H1 (cell line): ENCODE measurements at regions of chr22 and their contacts with region 1.

Region 1: GRCh38 chr22:30968924-30969539 is at the start of gene TUG1:
- DNase-seq: peak; percentile 93
- H3K4me3 ChIP-seq: peak within 1 kb of the TSS; percentile 67 to 84 (median 74)
- H3K27ac ChIP-seq: peak within 1 kb of the TSS; percentile 93
- H3K4me1 ChIP-seq: peaks cover 0 to 7% (median 4%) of the 10 kb centered on the region in 4 experiments; a peak in 4 of 7 replicates
- H3K27me3 ChIP-seq: no peaks in the 10 kb centered on the region
- CTCF ChIP-seq: no peak
- EP300 ChIP-seq: no peak; a peak in 1 of 3 replicates
- POLR2A ChIP-seq: peak; percentile 85 to 97
- RAD21 ChIP-seq: peak in 1 of 2 experiments; percentile 0; a peak in 2 of 4 replicates
- total RNA-seq, gene TUG1: 106 and 119 TPM in 2 replicates

Region 2: GRCh38 chr22:30947816-30948454 is 21.1 kb before region 1 on chr22:
- CTCF ChIA-PET with region 1: interaction called, 5 read pairs
- POLR2A ChIA-PET with region 1: interaction called, 18 read pairs
- DNase-seq: no peak
- H3K4me3 ChIP-seq: no peak overlapping the region
- H3K27ac ChIP-seq: no peak overlapping the region
- H3K4me1 ChIP-seq: no peaks in the 10 kb centered on the region
- H3K27me3 ChIP-seq: no peaks in the 10 kb centered on the region
- CTCF ChIP-seq: peak in 1 of 3 experiments; percentile 40; a peak in 2 of 4 replicates
- EP300 ChIP-seq: no peak
- POLR2A ChIP-seq: no peak
- RAD21 ChIP-seq: peak; percentile 38 to 41; a peak in 2 of 4 replicates

Region 3: GRCh38 chr22:30979932-30980331 is 10.9 kb after region 1 on chr22:
- CTCF ChIA-PET with region 1: interaction called, 7 read pairs
- POLR2A ChIA-PET with region 1: interaction called, 86 read pairs
- DNase-seq: no peak
- H3K4me3 ChIP-seq: no peak overlapping the region
- H3K27ac ChIP-seq: no peak overlapping the region
- H3K4me1 ChIP-seq: no peaks in the 10 kb centered on the region
- H3K27me3 ChIP-seq: no peaks in the 10 kb centered on the region
- CTCF ChIP-seq: no peak
- EP300 ChIP-seq: no peak
- POLR2A ChIP-seq: no peak
- RAD21 ChIP-seq: no peak; a peak in 1 of 4 replicates

Region 4: DNA sequence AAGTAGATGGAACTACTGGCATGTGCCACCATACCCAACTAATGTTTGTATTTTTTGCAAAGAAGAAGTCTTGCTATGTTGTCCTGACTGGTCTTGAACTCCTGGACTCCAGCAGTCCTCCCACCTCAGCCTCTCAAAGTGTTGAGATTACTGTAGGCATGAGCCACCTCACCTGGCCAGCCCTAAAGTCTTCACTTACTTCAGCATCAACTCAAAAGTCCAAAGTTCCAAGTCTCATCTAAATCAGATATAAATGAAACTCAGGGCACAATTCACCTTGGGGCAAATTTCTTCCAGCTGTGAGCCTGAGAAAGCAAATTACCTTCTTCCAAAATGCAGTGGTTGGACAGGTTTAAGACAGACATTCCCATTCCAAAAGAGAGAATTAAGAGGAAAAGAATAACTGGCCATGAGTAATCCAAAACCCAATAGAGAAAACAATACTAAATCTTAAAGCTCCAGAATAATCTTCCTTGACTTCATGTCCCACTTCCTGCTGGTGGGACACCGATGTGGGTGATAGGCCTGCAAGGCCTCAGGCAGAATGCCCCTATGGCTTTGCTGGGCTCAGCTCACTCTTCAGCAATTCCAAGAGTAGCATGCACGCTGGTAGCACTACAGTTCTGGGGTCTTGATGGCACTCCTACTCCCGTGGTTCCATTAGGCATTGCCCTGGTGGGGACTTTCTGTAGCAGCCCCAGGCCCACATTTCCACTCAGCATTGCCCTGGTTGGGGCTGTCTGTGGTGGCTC is 50.3 kb after region 1 on chr22:
- CTCF ChIA-PET with region 1: no interaction called
- POLR2A ChIA-PET with region 1: interaction called, 16 read pairs
- DNase-seq: no peak
- H3K4me3 ChIP-seq: no peak overlapping the region
- H3K27ac ChIP-seq: no peak overlapping the region
- H3K4me1 ChIP-seq: peaks cover 0 to 3% (median 0%) of the 10 kb centered on the region in 4 experiments; a peak in 1 of 7 replicates
- H3K27me3 ChIP-seq: no peaks in the 10 kb centered on the region
- CTCF ChIP-seq: no peak
- EP300 ChIP-seq: no peak
- POLR2A ChIP-seq: no peak
- RAD21 ChIP-seq: no peak

Region 5: GRCh38 chr22:31046539-31047226 is 77.7 kb after region 1 on chr22:
- CTCF ChIA-PET with region 1: no interaction called
- POLR2A ChIA-PET with region 1: interaction called, 18 read pairs
- DNase-seq: no peak
- H3K4me3 ChIP-seq: no peak overlapping the region
- H3K27ac ChIP-seq: no peak overlapping the region
- H3K4me1 ChIP-seq: peaks cover 0 to 4% (median 0%) of the 10 kb centered on the region in 4 experiments; a peak in 1 of 7 replicates
- H3K27me3 ChIP-seq: peaks cover 0 to 2% (median 0%) of the 10 kb centered on the region in 4 experiments; a peak in 1 of 7 replicates
- CTCF ChIP-seq: no peak
- EP300 ChIP-seq: no peak
- POLR2A ChIP-seq: no peak
- RAD21 ChIP-seq: no peak

Region 6: DNA sequence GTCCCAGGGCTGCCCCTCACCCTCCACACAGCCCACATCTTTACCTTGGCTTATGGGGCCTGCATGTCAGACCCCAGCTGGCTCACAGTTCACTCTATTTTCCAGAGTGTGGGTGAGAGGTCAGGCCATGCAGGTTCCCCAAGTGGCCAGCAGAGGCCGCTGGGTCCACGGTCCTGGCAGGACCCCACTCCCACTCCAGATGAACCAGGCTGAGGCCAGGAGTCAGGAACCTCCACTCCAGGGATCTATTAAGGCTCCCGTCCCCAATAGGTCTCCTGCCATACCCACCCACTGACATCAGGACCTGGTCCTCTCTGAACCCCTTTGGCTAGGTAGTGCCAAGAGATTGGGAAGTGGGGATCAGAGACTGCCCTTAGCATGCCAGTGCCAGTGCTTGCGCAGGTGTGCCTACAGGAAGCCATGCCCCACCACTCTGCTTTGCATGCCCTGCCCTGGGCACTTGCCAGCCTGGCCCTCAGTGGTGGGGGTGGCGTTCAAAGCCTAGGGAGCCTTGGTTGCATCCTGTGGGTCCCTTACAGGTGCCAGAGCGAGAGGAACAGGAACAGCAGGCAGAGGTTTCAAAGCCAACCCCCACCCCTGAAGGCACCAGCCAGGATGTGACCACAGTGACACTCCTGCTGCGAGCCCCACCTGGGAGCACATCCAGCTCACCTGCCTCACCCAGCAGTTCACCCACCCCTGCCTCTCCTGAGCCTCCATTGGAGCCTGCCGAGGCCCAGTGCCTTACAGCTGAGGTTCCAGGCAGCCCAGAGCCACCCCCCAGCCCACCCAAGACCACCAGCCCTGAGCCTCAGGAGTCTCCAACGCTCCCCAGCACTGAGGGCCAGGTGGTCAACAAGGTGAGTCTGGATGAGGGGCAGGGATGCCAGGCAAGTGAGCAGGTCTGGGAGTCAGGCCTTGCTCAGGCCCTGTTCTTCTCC is 120.4 kb after region 1 on chr22:
- CTCF ChIA-PET with region 1: interaction called, 38 read pairs
- POLR2A ChIA-PET with region 1: interaction called, 220 read pairs
- DNase-seq: peak in 1 of 2 experiments; percentile 67
- H3K4me3 ChIP-seq: no peak overlapping the region
- H3K27ac ChIP-seq: no peak overlapping the region
- H3K4me1 ChIP-seq: peaks cover 0 to 13% (median 4%) of the 10 kb centered on the region in 4 experiments; a peak in 5 of 7 replicates
- H3K27me3 ChIP-seq: no peaks in the 10 kb centered on the region
- CTCF ChIP-seq: peak; percentile 83 to 88 (median 83)
- EP300 ChIP-seq: no peak
- POLR2A ChIP-seq: no peak
- RAD21 ChIP-seq: peak; percentile 69 to 79